Panc1 (cell line): ENCODE measurements at regions of chr5 and their contacts with region 1.

Region 1: DNA sequence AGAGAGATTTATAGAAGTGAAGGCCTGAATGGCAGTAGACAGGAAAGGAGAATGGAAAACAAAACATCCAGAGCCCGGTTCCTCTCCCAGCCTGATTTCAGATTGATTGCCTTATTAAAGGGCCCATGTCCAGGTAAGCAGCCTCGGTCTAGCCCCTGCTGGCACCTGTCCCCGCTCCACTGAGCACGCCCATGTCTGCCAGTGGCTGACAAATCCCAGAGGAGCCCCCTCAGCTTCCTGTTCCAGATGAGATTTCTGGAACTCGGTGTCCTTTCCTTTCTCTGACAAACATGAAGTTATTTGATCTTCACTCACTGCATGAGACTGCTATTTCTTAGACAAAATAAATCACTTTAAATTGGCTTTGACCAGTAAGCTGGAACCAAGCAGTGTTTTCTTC is 187.0 kb upstream of the ADCY2 start:
- DNase-seq: no peak
- ATAC-seq: no peak
- H3K4me3 ChIP-seq: no peak overlapping the region
- H3K27ac ChIP-seq: no peak overlapping the region
- H3K4me1 ChIP-seq: no peaks in the 10 kb centered on the region
- H3K27me3 ChIP-seq: no peaks in the 10 kb centered on the region
- CTCF ChIP-seq: no peak

Region 2: DNA sequence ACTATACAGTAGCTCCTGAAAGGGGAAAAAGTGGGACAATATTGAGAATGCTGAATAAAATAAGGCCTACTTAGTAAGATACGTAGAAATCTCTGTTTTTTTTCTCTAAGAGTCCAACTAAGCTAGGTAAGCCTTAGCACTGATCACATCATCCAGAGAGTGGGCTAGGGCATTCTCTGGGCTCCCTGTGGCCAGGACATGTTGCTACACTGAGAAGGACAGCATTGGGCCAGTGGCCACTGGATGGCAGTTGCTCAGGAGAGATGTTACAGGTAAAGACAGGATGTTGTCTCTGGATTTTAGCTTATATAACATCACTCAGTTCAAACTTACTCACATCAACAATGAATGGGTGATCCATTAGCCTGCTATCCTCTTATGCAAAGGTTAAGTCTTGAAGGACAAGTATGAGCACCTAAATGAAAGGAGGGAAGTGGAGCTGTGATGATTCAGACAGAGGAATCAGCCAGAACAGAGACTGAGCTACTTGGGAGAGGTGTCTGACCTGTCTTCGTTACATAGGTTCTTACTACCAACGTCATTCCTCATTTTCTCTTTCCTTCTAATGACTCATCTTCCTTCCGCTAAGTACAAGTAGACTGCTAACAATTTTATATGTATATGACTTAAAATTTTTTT is 39.6 kb before region 1 on chr5:
- CTCF ChIA-PET with region 1: no interaction called
- POLR2A ChIA-PET with region 1: no interaction called
- in situ Hi-C with region 1: no loop called
- intact Hi-C with region 1: loop called (anchors 5 kb)
- DNase-seq: no peak
- ATAC-seq: no peak
- H3K4me3 ChIP-seq: no peak overlapping the region
- H3K27ac ChIP-seq: no peak overlapping the region
- H3K4me1 ChIP-seq: no peaks in the 10 kb centered on the region
- H3K27me3 ChIP-seq: no peaks in the 10 kb centered on the region
- CTCF ChIP-seq: no peak

Region 3: GRCh38 chr5:7398596-7399280 is 189.8 kb after region 1 on chr5:
- CTCF ChIA-PET with region 1: no interaction called
- POLR2A ChIA-PET with region 1: no interaction called
- in situ Hi-C with region 1: no loop called
- intact Hi-C with region 1: no loop called
- DNase-seq: no peak
- ATAC-seq: no peak
- H3K4me3 ChIP-seq: no peak overlapping the region
- H3K27ac ChIP-seq: no peak overlapping the region
- H3K4me1 ChIP-seq: peaks cover 4% of the 10 kb centered on the region; the same call in 1 of the 2 replicates
- H3K27me3 ChIP-seq: peaks cover 21% of the 10 kb centered on the region
- CTCF ChIP-seq: no peak